ENCODE measurements at regions of chr1 and their contacts with region 1.

Region 1: GRCh38 chr1:63143482-63143881 is 178.9 kb upstream of the FOXD3 start:
- DNase-seq: no peak

Region 2: DNA sequence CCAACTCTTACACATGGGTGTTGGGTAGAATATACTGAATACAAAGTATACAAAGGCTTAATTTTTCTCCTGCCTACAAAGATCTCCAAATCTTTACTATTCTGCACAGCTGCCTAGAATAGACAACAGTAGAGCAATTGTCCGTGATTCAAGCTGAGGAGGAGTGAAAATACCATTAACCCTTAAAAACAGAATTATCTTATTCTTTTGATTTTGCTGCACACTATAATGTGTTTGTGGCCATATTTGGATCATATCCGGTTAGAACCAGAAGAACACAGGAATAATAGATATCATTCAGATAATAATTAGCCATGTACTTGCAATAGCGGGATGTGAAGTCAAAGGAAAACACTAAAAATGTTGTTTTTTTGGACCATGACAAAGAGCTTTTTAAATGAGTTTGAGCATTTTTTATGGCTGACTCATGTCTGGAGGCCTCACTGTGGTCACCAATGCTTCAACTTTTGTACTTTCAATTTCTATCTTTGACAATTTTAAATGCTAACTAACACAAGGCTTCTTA is 18.8 kb before region 1 on chr1:
- intact Hi-C with region 1: loop called in 1 of 2 experiments (anchors 1 kb)
- DNase-seq: no peak

Measured in posterior vena cava (tissue), 2 donors.